GM12878 (cell line): ENCODE measurements at regions of chr16 and their contacts with region 1.

Region 1: DNA sequence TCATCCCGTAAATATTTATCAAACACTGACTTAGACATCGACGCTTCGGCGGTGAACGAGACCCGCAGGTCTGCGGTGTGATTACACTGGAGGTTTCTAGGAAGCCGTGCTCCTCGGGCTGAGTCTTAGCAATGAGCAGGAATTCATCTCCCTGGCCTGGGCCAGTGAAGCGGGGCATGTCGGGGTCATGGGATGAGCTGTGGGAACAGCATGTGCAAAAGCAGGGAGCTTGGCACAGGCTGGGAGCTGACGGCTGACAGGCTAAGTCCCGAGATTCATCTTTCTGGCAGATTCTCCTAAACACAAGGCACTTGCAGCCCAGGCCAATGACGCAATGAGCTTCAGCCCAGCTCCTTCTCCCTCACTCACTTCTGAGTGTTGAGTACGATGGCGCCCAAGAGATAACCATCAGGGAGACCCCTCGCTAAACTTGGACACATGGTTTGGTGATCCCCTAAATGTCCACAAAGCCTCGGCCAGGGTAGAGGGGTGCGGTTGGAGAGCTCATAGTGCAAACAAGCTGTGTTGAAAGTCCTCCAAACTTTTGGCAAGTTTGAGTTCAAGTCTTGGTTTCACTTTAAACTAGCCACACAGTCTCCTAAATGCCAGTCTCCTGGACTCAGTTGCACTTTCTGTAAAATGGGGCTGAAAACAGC is 12.8 kb downstream of the CRISPLD2 start:
- DNase-seq: no peak
- ATAC-seq: no peak
- H3K4me3 ChIP-seq: no peak overlapping the region
- H3K27ac ChIP-seq: no peak overlapping the region
- H3K4me1 ChIP-seq: no peaks in the 10 kb centered on the region
- H3K27me3 ChIP-seq: no peaks in the 10 kb centered on the region; a peak in 2 of 4 replicates
- CTCF ChIP-seq: no peak
- EP300 ChIP-seq: no peak
- POLR2A ChIP-seq: no peak
- RAD21 ChIP-seq: no peak

Region 2: DNA sequence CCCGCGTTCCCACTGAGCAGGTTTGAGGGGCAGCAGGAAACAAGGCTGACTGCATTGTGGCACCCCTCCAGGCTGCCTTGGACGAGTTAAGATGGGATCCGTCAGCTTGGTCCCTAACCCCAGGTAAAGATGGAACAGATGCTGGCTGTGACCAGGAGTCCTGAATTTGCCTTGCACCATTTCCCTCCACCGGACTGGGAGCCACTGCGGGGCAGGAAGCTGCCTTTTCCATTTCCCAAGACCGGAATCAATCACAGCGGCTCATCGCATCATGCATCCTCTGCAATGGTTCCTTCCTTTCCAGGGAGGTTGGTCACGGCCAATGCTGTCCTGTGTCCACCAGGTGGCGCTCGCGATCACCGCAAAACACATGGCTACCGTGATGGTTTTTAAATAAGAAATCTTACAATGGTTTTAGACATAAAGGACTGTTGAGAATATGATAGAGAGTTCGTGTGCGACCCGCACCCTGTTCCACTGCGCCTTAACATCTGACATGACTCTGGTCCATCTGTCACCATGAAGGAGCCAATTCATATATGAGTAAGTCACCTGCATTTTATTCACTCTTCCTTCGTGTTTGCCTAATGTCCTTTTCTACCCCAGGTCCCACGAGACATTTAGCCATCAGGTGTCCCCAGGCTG is 321.3 kb before region 1 on chr16:
- CTCF ChIA-PET with region 1: no interaction called
- POLR2A ChIA-PET with region 1: no interaction called
- RAD21 ChIA-PET with region 1: no interaction called
- SMC1A ChIA-PET with region 1: no interaction called
- in situ Hi-C with region 1: no loop called
- intact Hi-C with region 1: no loop called
- DNase-seq: peak; percentile 62
- ATAC-seq: peak; percentile 37
- H3K4me3 ChIP-seq: no peak overlapping the region
- H3K27ac ChIP-seq: peak overlapping the region; percentile 63
- H3K4me1 ChIP-seq: peaks cover 64% of the 10 kb centered on the region
- H3K27me3 ChIP-seq: no peaks in the 10 kb centered on the region
- CTCF ChIP-seq: peak; percentile 93 to 96 (median 94)
- EP300 ChIP-seq: no peak
- POLR2A ChIP-seq: no peak
- RAD21 ChIP-seq: peak; percentile 96

Region 3: GRCh38 chr16:84808826-84809225 is 23.8 kb before region 1 on chr16:
- CTCF ChIA-PET with region 1: no interaction called
- POLR2A ChIA-PET with region 1: no interaction called
- RAD21 ChIA-PET with region 1: no interaction called
- SMC1A ChIA-PET with region 1: no interaction called
- in situ Hi-C with region 1: no loop called
- intact Hi-C with region 1: loop called (anchors 1 kb)
- DNase-seq: no peak
- ATAC-seq: no peak
- H3K4me3 ChIP-seq: no peak overlapping the region
- H3K27ac ChIP-seq: no peak overlapping the region
- H3K4me1 ChIP-seq: peaks cover 21% of the 10 kb centered on the region
- H3K27me3 ChIP-seq: peaks cover 0 to 1% of the 10 kb centered on the region in 2 experiments; a peak in 2 of 4 replicates
- CTCF ChIP-seq: no peak
- EP300 ChIP-seq: no peak
- POLR2A ChIP-seq: no peak
- RAD21 ChIP-seq: no peak